AG04450 (cell line): ENCODE measurements at regions of chr1 and their contacts with region 1.

Region 1: DNA sequence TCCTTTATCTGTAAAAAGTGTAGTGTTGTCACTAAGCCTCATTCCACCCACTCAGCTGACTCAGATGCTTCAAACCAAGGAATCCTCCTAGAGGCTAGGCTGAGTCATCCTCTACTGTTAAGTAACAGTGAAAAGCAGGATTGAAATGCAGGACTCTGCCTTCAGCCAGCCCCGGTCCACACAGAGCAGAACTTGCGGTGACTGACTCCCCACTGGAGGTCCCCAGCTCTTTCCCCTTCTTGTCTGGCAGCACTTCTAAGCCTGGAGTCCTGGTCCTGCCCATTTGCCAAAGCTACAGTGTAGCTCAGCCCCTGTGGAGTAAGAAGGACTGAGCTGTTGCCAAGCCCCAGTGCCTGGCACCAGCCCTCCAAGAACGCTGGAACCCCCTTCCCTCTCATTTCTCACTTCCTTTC is 1.7 kb downstream of the RAB7B start:
- DNase-seq: peak; percentile 80
- H3K4me3 ChIP-seq: peak overlapping the region; percentile 50
- H3K27ac ChIP-seq: peak overlapping the region; percentile 84
- H3K27me3 ChIP-seq: no peaks in the 10 kb centered on the region
- CTCF ChIP-seq: no peak

Region 2: DNA sequence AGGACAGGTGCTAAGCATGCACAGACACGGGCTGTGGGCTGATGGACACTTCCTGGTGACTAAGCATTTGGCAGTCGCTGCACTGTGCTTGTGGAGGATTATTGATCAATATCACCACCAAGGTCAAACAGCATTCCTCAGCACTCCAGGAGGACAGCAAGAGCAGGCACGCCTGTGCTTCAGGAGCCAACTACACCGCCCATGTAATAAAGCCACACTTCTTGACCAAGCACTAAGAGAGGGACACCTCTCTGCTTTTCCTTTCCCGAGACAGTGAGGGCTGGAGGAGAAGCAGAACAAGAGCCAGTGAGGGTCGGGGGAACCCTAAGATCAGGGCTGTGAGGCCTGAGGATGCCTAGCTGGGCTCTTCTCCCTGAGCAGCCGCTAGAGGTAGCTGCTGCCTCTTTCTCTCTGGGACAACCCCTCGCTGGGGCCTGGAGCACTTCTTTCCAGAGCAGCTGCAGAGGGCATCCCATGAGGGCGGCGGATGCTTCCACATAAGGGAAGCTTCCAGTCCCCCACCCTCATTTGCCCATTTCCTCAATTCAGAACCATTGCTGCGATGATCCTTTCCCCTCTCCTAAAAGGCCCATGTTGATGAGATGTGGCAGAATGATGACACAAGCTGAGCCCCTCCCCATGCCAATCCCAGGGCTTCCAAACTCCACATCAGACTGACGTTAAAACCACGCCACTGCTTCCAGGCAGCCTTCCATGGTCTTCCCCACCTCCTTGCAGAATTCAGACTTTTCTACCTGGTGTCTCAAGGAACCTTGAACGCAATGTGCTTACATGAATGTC is 17.4 kb before region 1 on chr1:
- CTCF ChIA-PET with region 1: interaction called, 29 read pairs
- POLR2A ChIA-PET with region 1: interaction called, 3 read pairs
- DNase-seq: peak; percentile 16
- H3K4me3 ChIP-seq: no peak overlapping the region
- H3K27ac ChIP-seq: peak overlapping the region; percentile 2
- H3K27me3 ChIP-seq: no peaks in the 10 kb centered on the region
- CTCF ChIP-seq: peak; percentile 94

Region 3: GRCh38 chr1:206012086-206012859 is 10.8 kb after region 1 on chr1:
- CTCF ChIA-PET with region 1: no interaction called
- POLR2A ChIA-PET with region 1: no interaction called
- DNase-seq: no peak
- H3K4me3 ChIP-seq: no peak overlapping the region
- H3K27ac ChIP-seq: no peak overlapping the region
- H3K27me3 ChIP-seq: peaks cover 10% of the 10 kb centered on the region
- CTCF ChIP-seq: no peak

Region 4: GRCh38 chr1:206117151-206117948 is 115.9 kb after region 1 on chr1 and contains the start of gene AVPR1B:
- CTCF ChIA-PET with region 1: no interaction called
- POLR2A ChIA-PET with region 1: no interaction called
- DNase-seq: no peak
- H3K4me3 ChIP-seq: peak within 1 kb of the TSS; percentile 32
- H3K27ac ChIP-seq: no peak within 1 kb of the TSS
- H3K27me3 ChIP-seq: peaks cover 48% of the 10 kb centered on the region
- CTCF ChIP-seq: peak; percentile 5; the same call in 1 of the 2 replicates
- polyA plus RNA-seq, gene AVPR1B: not detected in 2 replicates